Colonic mucosa (tissue), 4 donors: ENCODE measurements at regions of chr17 and their contacts with region 1.

Region 1: DNA sequence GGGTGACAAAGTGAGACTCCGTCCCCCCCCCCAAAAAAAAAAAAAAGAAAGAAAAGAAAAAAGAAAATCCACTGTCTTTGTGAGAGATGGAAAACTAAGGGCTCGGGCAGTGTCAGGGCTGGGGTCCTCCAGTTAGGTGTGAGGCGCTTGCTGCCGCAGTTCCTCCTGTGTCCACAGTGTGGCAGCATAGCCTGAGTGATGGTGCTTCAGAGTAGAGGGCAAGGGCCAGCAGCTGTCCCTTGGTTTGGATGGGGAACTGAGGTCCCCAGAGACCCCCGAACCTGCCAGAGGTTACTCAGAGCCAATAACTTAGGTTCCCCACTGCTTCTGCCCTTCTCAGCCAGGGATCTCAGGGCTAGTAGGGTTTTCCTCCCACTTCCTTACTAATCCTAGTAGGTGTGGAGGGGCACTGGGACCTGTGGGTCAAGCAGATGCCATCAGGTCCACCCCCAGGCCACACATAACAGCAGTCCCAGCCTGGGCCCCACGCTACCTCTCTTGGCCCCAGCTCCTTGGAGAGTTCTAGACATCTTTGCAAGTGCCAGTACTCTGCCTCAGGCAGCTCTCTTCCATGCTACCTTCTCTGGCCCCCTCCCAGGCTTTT is 7.9 kb upstream of the LLGL1 start:
- DNase-seq: peak; percentile 77
- H3K4me3 ChIP-seq: no peak overlapping the region
- H3K27ac ChIP-seq: no peak overlapping the region
- H3K4me1 ChIP-seq: no peaks in the 10 kb centered on the region
- H3K27me3 ChIP-seq: no peaks in the 10 kb centered on the region
- CTCF ChIP-seq: peak; percentile 96

Region 2: DNA sequence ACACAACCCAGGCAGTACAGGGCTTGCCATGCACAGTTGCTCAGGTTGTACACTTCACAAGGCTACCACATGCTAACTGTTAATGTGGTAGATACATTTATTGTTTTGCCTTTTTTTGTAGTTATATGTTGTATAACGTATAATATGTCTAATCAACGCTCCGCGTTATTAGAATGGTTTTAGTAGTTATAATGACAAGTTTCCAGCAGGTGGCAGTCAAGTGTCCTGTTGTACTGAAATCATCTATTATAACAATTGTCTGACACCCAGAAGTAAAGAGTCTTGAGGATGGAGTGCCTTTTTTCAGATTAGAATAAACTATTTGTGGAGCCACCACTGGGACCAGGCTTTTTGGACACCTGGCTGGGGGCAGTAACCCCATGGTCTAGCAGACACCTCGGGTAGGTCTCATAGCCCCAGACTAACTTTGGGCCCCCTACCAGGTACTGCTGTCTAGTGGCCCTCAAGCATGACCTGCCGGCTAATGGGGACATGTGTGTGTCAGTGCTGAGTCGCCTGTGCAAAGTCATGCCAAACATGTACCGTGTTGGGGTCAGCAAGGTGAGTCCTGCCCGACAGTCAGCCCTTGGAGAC is 76.2 kb before region 1 on chr17:
- intact Hi-C with region 1: loop called (anchors 5 kb)
- DNase-seq: peak; percentile 55
- H3K4me3 ChIP-seq: no peak overlapping the region
- H3K27ac ChIP-seq: no peak overlapping the region
- H3K4me1 ChIP-seq: no peaks in the 10 kb centered on the region
- H3K27me3 ChIP-seq: no peaks in the 10 kb centered on the region
- CTCF ChIP-seq: peak; percentile 61